OCI-LY7 (cell line): ENCODE measurements at regions of chr1 and their contacts with region 1.

Region 1: DNA sequence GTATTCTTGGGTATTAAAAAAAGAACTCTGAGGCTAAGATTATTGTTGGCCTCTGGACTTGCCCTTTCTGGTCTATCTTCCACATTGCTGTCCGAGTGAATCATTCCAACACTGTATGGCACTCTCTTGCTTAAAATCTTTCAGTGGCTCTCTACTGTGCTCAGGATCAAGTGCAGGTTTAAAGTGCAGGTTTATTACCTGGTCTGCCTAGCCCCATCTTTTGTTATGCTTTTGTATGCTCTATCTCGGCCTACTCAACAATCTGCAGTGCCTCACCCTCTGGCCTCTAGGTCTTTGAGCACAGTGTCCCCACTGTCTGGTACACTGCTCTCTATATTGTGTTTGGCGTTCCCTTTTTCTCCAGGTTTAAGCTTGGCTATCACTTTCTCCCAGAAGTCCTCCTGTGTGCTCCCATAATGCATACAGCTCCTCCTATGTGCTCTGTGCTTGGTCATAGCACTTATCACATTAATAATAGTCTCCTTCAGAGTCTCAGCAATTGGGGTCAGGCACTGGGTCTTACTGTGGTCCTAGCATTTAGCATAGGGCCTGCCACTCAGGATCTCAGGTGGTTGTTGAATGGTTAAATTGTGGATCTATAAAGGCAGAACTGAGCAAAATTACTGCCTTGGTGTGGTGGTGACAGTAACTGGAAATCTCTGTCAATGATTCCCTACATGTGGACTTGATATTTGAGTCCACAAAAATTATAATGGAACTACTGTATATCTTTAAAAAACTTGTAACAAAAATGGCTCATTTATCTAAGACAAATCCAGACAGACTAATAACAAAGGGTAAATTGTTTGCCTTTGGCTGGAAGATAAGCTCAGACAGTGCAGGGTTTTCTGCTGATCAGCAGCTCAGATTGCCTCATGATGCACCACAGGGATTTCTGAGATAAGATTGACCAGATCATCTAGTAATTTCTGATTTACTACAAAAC is 10.6 kb upstream of the LDLRAD1 start:
- DNase-seq: no peak
- H3K4me3 ChIP-seq: no peak overlapping the region
- H3K27ac ChIP-seq: no peak overlapping the region
- H3K4me1 ChIP-seq: no peaks in the 10 kb centered on the region
- CTCF ChIP-seq: no peak

Region 2: DNA sequence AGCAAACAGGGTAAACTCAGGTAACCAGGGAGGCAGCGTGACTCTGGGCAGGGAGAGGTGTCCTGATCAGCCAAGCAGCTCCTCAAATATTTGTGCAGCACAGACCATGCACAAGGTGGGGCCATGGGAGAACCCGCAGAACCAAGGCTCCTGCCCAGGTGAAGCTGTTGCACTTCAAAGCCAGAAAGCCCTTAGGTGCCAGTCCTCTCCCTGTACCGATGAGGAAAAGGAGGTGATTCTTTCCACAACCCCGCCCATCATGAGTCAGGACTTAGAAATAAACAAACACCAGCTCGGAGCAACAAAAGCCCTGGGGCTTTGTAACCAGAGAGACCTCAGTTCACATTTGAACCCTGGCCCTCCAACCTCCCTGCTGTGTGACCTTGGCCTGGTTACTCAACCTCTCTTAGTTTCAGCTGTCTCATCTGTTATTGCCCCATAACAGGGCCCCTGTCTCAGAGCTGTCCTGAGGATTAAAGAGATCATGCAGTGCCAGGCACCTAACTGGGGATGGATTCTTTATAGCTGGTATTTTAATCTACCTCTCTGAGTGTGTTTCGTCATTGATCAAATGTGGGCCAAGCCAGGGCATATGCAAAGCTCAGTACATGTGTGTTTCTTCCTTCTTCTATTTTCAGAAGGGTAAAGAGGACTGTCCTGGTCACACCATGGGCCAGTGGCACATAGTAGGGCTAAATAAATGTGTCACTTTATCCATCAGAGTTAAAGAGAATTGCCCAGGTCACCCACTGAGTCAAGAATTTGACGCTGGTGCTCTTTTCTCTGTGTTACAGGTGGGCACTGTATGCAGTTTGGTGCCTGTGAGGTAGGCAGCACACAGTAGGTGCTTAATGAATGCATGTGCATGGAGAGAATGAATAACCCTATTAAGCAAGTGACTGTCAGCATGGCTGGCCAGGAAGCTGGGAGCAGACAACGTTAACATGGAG is 12.0 kb before region 1 on chr1:
- CTCF ChIA-PET with region 1: no interaction called
- POLR2A ChIA-PET with region 1: no interaction called
- intact Hi-C with region 1: no loop called
- DNase-seq: no peak
- H3K4me3 ChIP-seq: no peak overlapping the region
- H3K27ac ChIP-seq: no peak overlapping the region
- H3K4me1 ChIP-seq: no peaks in the 10 kb centered on the region
- CTCF ChIP-seq: no peak

Region 3: DNA sequence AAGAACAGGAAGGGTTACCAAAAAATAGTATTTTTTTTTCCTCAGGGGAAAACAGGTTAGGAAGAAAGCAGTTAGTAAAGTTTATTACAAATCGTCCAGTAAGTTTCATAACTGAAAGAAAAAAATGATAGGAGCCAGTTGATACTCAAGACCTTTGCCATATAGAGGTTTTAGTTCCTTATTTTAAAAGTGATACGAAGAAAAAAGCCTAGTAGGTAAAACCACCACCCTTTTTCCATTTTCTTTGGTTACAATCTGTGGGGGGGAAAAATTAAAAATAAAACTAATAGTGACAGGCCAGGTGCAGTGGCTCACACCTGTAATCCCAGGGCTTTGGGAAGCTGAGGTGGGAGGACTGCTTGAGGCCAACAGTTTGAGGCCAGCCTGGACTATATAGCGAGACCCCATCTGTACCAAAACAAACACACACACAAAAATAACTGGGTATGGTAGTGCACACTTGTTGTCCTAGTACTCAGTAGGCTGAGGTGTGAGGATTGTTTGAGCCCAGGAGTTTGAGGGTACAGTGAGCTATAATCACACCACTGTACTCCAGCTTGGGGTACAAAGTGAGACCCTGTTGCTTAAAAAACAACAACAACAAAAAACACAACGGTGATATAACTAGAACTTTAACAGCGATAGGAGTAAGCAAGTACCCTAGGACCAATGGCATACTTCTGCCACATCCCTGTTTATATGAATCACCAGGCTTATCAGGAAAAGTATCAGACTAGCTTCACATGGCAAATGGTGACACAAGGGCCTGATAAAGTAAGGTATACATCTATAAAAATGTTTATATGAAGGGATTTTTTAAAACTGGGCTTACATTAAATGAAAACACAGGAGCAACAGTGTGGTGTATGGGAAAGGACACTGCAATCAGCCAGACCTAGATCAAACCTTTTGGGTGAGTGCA is 19.1 kb after region 1 on chr1:
- CTCF ChIA-PET with region 1: no interaction called
- POLR2A ChIA-PET with region 1: interaction called, 10 read pairs
- intact Hi-C with region 1: no loop called
- DNase-seq: peak; percentile 20
- H3K4me3 ChIP-seq: no peak overlapping the region
- H3K27ac ChIP-seq: peak overlapping the region; percentile 38
- H3K4me1 ChIP-seq: peaks cover 32% of the 10 kb centered on the region
- CTCF ChIP-seq: no peak

Region 4: GRCh38 chr1:54081306-54082270 is 53.0 kb after region 1 on chr1:
- CTCF ChIA-PET with region 1: no interaction called
- POLR2A ChIA-PET with region 1: no interaction called
- intact Hi-C with region 1: no loop called
- DNase-seq: peak; percentile 65
- H3K4me3 ChIP-seq: no peak overlapping the region
- H3K27ac ChIP-seq: no peak overlapping the region
- H3K4me1 ChIP-seq: no peaks in the 10 kb centered on the region
- CTCF ChIP-seq: peak; percentile 96